Breast epithelium (tissue), 4 donors: ENCODE measurements at regions of chr11 and their contacts with region 1.

Region 1: GRCh38 chr11:35617687-35618496 is at the start of gene FJX1:
- DNase-seq: peak in 1 of 2 donors; percentile 39
- H3K4me3 ChIP-seq: peak within 1 kb of the TSS; percentile 47 to 90 (median 73)
- H3K27ac ChIP-seq: peak within 1 kb of the TSS; percentile 83 to 93
- H3K4me1 ChIP-seq: peaks cover 8 to 20% of the 10 kb centered on the region in 2 donors
- H3K27me3 ChIP-seq: no peaks in the 10 kb centered on the region
- CTCF ChIP-seq: no peak
- POLR2A ChIP-seq: no peak
- total RNA-seq, gene FJX1: 1.1 to 12.1 (median 8.3) TPM

Region 2: GRCh38 chr11:35658028-35658948 is 40.4 kb after region 1 on chr11:
- intact Hi-C with region 1: no loop called
- DNase-seq: no peak
- H3K4me3 ChIP-seq: no peak overlapping the region
- H3K27ac ChIP-seq: no peak overlapping the region
- H3K4me1 ChIP-seq: peaks cover 0 to 1% of the 10 kb centered on the region in 2 donors
- H3K27me3 ChIP-seq: no peaks in the 10 kb centered on the region
- CTCF ChIP-seq: no peak
- POLR2A ChIP-seq: no peak

Region 3: GRCh38 chr11:35933320-35933871 is 315.5 kb after region 1 on chr11:
- intact Hi-C with region 1: no loop called
- DNase-seq: no peak
- H3K4me3 ChIP-seq: no peak overlapping the region
- H3K27ac ChIP-seq: no peak overlapping the region
- H3K4me1 ChIP-seq: no peaks in the 10 kb centered on the region
- H3K27me3 ChIP-seq: no peaks in the 10 kb centered on the region
- CTCF ChIP-seq: no peak
- POLR2A ChIP-seq: no peak

Region 4: GRCh38 chr11:36265793-36266628 is 648.1 kb after region 1 on chr11:
- intact Hi-C with region 1: loop called (anchors 5 kb)
- DNase-seq: peak; percentile 22 to 61
- H3K4me3 ChIP-seq: no peak overlapping the region
- H3K27ac ChIP-seq: no peak overlapping the region
- H3K4me1 ChIP-seq: no peaks in the 10 kb centered on the region
- H3K27me3 ChIP-seq: no peaks in the 10 kb centered on the region
- CTCF ChIP-seq: peak; percentile 64 to 86 (median 75)
- POLR2A ChIP-seq: no peak